ENCODE measurements at regions of chr6 and their contacts with region 1.

Region 1: GRCh38 chr6:149513915-149514314 is 29.1 kb upstream of the ZC3H12D start:
- DNase-seq: no peak
- H3K4me3 Mint-ChIP-seq: no peak overlapping the region
- H3K27ac Mint-ChIP-seq: no peak overlapping the region
- H3K4me1 Mint-ChIP-seq: peaks cover 47% of the 10 kb centered on the region
- H3K27me3 Mint-ChIP-seq: no peaks in the 10 kb centered on the region

Region 2: DNA sequence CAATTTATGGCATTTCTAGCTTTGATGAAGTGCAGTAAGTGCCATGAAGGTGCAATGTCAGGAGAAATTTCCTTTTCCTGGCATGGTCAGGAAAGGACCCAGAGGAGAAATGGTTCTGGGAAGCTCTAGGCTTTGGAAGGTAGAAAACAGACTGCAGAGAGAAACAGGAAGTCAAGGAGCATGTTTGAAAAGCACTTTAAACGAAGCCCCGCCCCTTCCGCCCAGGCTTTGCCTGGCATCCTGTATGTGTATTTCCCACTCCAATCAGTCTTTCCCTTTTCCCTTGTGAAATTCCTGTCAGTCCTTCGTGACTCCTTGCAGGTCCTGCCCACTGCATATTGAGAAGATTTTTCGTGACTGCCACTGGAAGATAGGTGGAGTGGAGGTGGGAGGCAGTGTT is 1492.2 kb before region 1 on chr6:
- intact Hi-C with region 1: no loop called
- DNase-seq: no peak
- H3K4me3 Mint-ChIP-seq: no peak overlapping the region
- H3K27ac Mint-ChIP-seq: no peak overlapping the region
- H3K4me1 Mint-ChIP-seq: no peaks in the 10 kb centered on the region
- H3K27me3 Mint-ChIP-seq: no peaks in the 10 kb centered on the region

Region 3: DNA sequence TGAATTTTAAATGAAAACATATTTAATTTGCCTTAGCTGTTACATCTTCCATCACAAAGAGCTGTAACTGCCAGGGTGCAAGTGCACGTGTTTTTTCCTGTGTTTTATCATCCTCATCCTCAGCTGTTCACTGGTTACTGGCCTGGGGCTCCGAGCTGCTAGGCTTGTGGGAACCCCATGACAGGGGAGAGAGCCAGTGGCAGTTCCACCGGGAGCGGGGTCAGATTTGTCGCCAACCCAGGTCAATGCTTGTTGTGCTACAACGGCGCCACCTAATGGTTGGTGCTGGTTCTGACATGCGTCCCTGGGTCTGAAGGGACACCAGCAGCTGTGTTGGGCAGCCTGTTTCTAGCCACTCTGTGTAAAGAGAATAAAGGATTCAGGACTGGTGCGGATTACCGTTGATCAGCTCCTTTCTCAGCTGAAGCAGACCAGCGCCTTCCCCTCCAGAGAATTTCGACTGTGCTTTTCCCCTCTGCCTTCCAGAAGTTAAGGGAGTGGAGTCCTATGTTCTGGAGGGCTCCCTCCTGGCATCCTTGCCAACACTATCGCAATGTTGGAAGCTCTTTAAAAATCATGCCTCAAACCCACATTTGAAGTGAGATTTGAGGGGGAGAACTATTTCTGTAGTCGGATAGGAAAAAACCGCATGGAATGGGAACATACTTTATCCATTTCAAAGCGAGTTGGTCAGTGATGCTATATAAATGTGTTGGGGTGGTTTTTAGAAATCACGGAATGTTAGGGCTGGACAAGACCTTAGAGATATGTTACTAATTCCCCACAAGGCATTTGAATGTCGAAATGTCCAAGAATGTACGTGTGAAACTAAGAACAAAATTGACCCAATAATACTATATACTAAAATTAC is 81.8 kb before region 1 on chr6:
- intact Hi-C with region 1: loop called (anchors 1 kb)
- DNase-seq: peak; percentile 79
- H3K4me3 Mint-ChIP-seq: peak overlapping the region; percentile 48
- H3K27ac Mint-ChIP-seq: peak overlapping the region; percentile 79
- H3K4me1 Mint-ChIP-seq: peaks cover 23% of the 10 kb centered on the region
- H3K27me3 Mint-ChIP-seq: no peaks in the 10 kb centered on the region

Region 4: GRCh38 chr6:149454386-149454848 is 59.5 kb before region 1 on chr6:
- intact Hi-C with region 1: loop called (anchors 2 kb)
- DNase-seq: no peak
- H3K4me3 Mint-ChIP-seq: no peak overlapping the region
- H3K27ac Mint-ChIP-seq: no peak overlapping the region
- H3K4me1 Mint-ChIP-seq: peaks cover 24% of the 10 kb centered on the region
- H3K27me3 Mint-ChIP-seq: no peaks in the 10 kb centered on the region

Region 5: GRCh38 chr6:149484733-149485700 is 28.9 kb before region 1 on chr6 and contains the start of gene ZC3H12D:
- intact Hi-C with region 1: loop called (anchors 1 kb)
- DNase-seq: peak; percentile 76
- H3K4me3 Mint-ChIP-seq: peak within 1 kb of the TSS; percentile 92
- H3K27ac Mint-ChIP-seq: peak within 1 kb of the TSS; percentile 99
- H3K4me1 Mint-ChIP-seq: peaks cover 74% of the 10 kb centered on the region
- H3K27me3 Mint-ChIP-seq: no peaks in the 10 kb centered on the region
- total RNA-seq, gene ZC3H12D: 94.7 and 96.7 TPM in 2 replicates

Measured in activated T-helper 1 cell treated with anti-CD3 and anti-CD28 coated beads, Interleukin-12 subunit alpha, Interleukin-12 subunit beta, Interleukin-2, Interleukin-4 antibody, amounts not matched to agents 30 ng/mL and 10 ng/mL and 1 ng/mL, durations not matched to agents 14 hours and 24 hours and 36 hours (primary cell).